ENCODE measurements at regions of chr6 and their contacts with region 1.

Region 1: GRCh38 chr6:36615018-36615761 is 21.0 kb downstream of the SRSF3 start:
- DNase-seq: peak in 1 of 2 experiments; percentile 68
- H3K4me3 ChIP-seq: no peak overlapping the region
- H3K4me3 Mint-ChIP-seq: no peak overlapping the region
- H3K27ac Mint-ChIP-seq: no peak overlapping the region
- H3K4me1 ChIP-seq: no peaks in the 10 kb centered on the region
- H3K4me1 Mint-ChIP-seq: no peaks in the 10 kb centered on the region
- H3K27me3 ChIP-seq: no peaks in the 10 kb centered on the region
- H3K27me3 Mint-ChIP-seq: no peaks in the 10 kb centered on the region
- CTCF ChIP-seq: peak; percentile 67 to 72

Region 2: GRCh38 chr6:36724514-36725390 is 109.6 kb after region 1 on chr6:
- CTCF ChIA-PET with region 1: interaction called, 13 read pairs
- POLR2A ChIA-PET with region 1: no interaction called
- intact Hi-C with region 1: loop called (anchors 2 kb)
- DNase-seq: peak; percentile 74 to 80
- H3K4me3 ChIP-seq: no peak overlapping the region
- H3K4me3 Mint-ChIP-seq: no peak overlapping the region
- H3K27ac Mint-ChIP-seq: no peak overlapping the region
- H3K4me1 ChIP-seq: no peaks in the 10 kb centered on the region
- H3K4me1 Mint-ChIP-seq: peaks cover 7% of the 10 kb centered on the region
- H3K27me3 ChIP-seq: no peaks in the 10 kb centered on the region
- H3K27me3 Mint-ChIP-seq: no peaks in the 10 kb centered on the region
- CTCF ChIP-seq: peak; percentile 42 to 76